PC-9 (cell line): ENCODE measurements at regions of chr13 and their contacts with region 1.

Region 1: GRCh38 chr13:52968074-52968700 is 60.4 kb upstream of the OLFM4 start:
- DNase-seq: peak; percentile 58 to 67
- H3K4me3 ChIP-seq: no peak overlapping the region
- H3K27ac ChIP-seq: no peak overlapping the region
- H3K4me1 ChIP-seq: no peaks in the 10 kb centered on the region
- H3K27me3 ChIP-seq: 0 out of 2 replicates have a peak, but pooled peaks cover under 1% of the 10 kb centered on the region
- CTCF ChIP-seq: peak; percentile 93

Region 2: GRCh38 chr13:52665325-52665724 is 302.9 kb before region 1 on chr13:
- CTCF ChIA-PET with region 1: interaction called, 25 read pairs
- POLR2A ChIA-PET with region 1: no interaction called
- intact Hi-C with region 1: loop called (anchors 2 kb)
- DNase-seq: peak in 1 of 2 experiments; percentile 69
- H3K4me3 ChIP-seq: no peak overlapping the region
- H3K27ac ChIP-seq: no peak overlapping the region
- H3K4me1 ChIP-seq: no peaks in the 10 kb centered on the region
- H3K27me3 ChIP-seq: no peaks in the 10 kb centered on the region
- CTCF ChIP-seq: peak; percentile 68

Region 3: GRCh38 chr13:53151336-53152056 is 183.3 kb after region 1 on chr13:
- CTCF ChIA-PET with region 1: no interaction called
- POLR2A ChIA-PET with region 1: no interaction called
- intact Hi-C with region 1: loop called (anchors 5 kb)
- DNase-seq: peak in 1 of 2 experiments; percentile 14
- H3K4me3 ChIP-seq: no peak overlapping the region
- H3K27ac ChIP-seq: no peak overlapping the region
- H3K4me1 ChIP-seq: no peaks in the 10 kb centered on the region
- H3K27me3 ChIP-seq: no peaks in the 10 kb centered on the region
- CTCF ChIP-seq: peak; percentile 71

Region 4: GRCh38 chr13:53368948-53369347 is 400.8 kb after region 1 on chr13:
- CTCF ChIA-PET with region 1: no interaction called
- POLR2A ChIA-PET with region 1: no interaction called
- intact Hi-C with region 1: no loop called
- DNase-seq: no peak
- H3K4me3 ChIP-seq: no peak overlapping the region
- H3K27ac ChIP-seq: no peak overlapping the region
- H3K4me1 ChIP-seq: no peaks in the 10 kb centered on the region
- H3K27me3 ChIP-seq: no peaks in the 10 kb centered on the region
- CTCF ChIP-seq: no peak